ENCODE measurements at regions of chr2 and their contacts with region 1.

Region 1: GRCh38 chr2:202870431-202871299 is 901 bp downstream of the ICA1L start:
- DNase-seq: peak; percentile 78
- H3K4me3 ChIP-seq: peak overlapping the region; percentile 80
- H3K27ac ChIP-seq: peak overlapping the region; percentile 39
- H3K4me1 ChIP-seq: peaks cover 11% of the 10 kb centered on the region
- CTCF ChIP-seq: peak; percentile 85

Region 2: GRCh38 chr2:202051499-202052161 is 819.0 kb before region 1 on chr2:
- CTCF ChIA-PET with region 1: no interaction called
- POLR2A ChIA-PET with region 1: no interaction called
- intact Hi-C with region 1: no loop called
- DNase-seq: no peak
- H3K4me3 ChIP-seq: no peak overlapping the region
- H3K27ac ChIP-seq: no peak overlapping the region
- H3K4me1 ChIP-seq: no peaks in the 10 kb centered on the region
- CTCF ChIP-seq: no peak

Region 3: DNA sequence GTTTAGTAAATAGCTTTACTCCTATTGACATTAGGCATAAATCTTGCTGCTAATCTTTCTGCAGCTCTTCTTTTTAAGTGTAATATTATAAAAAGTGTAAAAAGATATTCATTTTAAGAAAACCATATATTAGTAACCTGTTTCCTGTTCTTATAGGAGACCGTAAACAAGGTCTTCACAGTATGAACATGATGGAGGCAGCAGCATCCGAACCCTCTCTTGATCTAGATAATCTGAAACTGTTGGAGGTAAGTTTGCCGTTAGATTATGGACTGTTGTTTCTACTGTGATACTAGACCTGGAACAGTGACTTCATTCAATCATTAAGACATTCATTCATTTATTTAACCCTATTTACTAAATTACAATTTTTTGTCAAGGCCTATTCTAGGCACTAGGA is 355.9 kb before region 1 on chr2:
- CTCF ChIA-PET with region 1: no interaction called
- POLR2A ChIA-PET with region 1: no interaction called
- intact Hi-C with region 1: no loop called
- DNase-seq: no peak
- H3K4me3 ChIP-seq: no peak overlapping the region
- H3K27ac ChIP-seq: no peak overlapping the region
- H3K4me1 ChIP-seq: no peaks in the 10 kb centered on the region
- CTCF ChIP-seq: no peak

Region 4: GRCh38 chr2:202574541-202574940 is 296.1 kb before region 1 on chr2:
- CTCF ChIA-PET with region 1: no interaction called
- POLR2A ChIA-PET with region 1: no interaction called
- intact Hi-C with region 1: loop called (anchors 5 kb)
- DNase-seq: no peak
- H3K4me3 ChIP-seq: no peak overlapping the region
- H3K27ac ChIP-seq: no peak overlapping the region
- H3K4me1 ChIP-seq: no peaks in the 10 kb centered on the region
- CTCF ChIP-seq: no peak

Region 5: DNA sequence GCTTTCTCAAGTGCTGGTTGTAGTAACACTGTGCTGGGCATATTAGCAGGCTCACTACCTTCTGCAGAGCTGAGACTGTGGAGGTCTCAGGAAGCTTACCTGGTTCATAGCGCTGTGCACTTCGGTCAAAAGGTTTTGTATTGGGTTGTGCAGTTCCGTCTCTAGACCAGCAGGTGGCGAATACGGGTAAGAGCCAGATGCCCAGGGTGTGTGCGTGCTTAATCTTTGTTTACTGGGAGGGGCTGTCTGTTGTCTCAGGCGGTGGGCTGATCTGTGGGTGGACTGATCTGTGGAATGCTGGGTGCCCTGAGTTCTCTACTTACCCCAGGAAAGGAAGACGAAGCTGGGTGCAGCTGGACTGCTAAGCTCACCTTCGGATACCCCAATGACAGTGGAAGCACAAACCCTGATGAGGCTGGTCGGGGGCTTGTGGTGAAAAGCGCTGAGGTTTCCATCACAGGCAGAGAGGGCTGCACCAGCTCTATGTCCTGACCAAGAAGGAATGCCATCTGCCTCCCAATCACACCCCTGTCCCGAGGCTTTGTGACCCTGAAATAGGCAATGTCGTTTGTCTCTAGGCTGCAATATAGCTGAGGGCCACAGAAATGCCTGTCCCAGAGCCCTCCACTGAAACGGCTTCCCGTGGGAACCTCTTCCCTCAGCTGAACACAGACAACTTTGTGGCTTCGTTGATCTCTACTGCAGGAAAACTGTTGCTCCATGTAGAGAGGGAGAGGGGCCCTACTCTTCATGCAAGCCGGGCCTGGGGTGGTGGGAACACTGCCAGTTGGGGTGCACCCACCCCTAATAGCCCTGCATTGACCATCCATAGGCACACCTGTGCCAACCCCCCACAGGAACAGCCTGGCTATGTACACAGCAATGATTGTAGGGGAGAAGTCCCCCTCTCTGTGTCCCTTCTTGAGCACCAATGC is 281.8 kb before region 1 on chr2:
- CTCF ChIA-PET with region 1: interaction called, 3 read pairs
- POLR2A ChIA-PET with region 1: interaction called, 3 read pairs
- intact Hi-C with region 1: loop called (anchors 1 kb)
- DNase-seq: peak; percentile 86
- H3K4me3 ChIP-seq: no peak overlapping the region
- H3K27ac ChIP-seq: no peak overlapping the region
- H3K4me1 ChIP-seq: peaks cover 3% of the 10 kb centered on the region
- CTCF ChIP-seq: peak; percentile 93

Region 6: DNA sequence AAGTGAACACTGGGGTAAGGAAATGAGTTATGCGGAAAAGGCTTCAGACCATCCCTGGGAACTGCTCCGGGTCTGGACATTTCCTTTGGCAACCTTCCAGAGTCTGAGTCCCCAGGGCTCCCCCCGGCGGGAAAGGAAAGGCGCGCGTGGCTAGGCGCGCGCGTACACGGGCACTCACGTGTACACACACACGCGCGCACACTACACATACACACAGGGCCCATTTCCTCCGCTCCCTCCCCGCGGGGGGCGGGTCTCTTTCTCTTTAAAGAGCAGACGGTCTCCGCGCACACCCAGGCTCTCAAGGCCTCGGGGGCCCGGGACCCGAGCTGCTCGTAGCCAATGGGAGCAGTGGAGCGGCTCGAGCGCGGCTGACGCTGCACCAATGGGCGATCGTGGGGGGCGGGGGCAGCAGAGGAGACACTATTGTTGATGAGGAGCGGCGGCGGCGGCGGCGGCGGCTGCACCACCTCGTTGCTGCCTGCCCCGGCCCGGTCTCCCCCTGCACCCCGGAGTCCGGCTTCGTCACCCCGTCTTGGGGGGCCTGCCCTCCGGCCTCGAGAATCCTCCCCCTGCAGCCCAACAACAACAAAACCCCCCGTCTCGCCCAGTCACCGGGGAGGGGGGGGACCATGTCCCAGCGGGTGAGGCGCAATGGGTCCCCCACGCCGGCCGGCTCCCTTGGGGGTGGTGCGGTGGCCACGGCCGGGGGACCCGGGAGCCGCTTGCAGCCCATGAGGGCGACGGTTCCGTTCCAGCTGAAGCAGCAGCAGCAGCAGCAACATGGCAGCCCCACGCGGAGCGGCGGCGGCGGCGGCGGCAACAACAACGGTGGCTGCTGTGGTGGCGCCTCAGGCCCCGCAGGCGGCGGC is 235.9 kb before region 1 on chr2 and contains the start of gene FAM117B:
- CTCF ChIA-PET with region 1: no interaction called
- POLR2A ChIA-PET with region 1: interaction called, 3 read pairs
- intact Hi-C with region 1: loop called (anchors 2 kb)
- DNase-seq: peak; percentile 99
- H3K4me3 ChIP-seq: peak within 1 kb of the TSS; percentile 83
- H3K27ac ChIP-seq: peak within 1 kb of the TSS; percentile 69
- H3K4me1 ChIP-seq: peaks cover 38% of the 10 kb centered on the region
- CTCF ChIP-seq: 0 out of 2 replicates have a peak, but pooled peaks have one; percentile 6
- total RNA-seq, gene FAM117B: 3.1 and 4.2 TPM in 2 replicates

Region 7: DNA sequence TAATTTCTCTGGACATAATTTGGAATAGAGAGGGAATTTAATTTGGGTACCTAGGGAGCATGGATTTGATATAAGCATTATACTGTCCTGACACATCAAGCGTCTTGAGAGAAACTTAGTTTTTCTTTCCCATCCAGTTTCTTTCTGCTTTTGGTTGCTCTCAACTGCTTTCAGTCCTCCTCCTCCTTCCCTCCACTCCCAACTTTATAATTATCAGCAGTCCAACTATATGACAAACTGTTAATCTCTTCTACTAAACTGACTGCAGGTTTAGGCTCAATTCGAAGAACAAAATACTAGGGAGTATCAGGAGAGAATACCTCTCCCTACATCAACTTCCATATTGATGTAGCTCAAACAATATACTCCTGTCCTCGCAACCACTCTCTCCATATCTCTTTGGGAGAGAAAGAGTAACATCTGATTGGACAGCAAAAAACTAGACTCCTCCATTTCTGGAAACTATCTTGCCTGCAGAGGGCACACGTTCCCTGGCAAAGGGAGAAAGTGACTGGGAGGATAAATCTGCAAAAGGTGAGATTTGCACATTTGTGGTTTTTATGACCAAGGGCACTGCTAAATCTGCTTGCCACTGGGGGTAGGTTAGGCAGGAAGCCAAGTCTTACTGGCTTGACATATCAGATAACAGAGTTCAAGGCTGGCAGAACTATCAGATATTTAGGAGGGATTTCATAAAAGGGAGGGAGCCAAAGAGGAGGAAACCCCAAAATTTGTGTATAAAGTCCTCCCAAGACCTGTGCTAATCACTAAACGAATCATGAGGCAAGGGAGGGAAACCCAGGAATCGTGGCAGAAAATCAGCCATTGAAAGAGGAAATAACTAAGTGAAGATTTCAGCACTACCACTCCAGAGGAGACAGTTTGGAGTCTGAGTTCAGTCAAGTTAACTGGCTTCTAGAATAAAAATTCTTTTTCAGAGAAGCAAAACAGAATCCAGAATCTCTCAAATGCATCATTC is 39.1 kb before region 1 on chr2:
- CTCF ChIA-PET with region 1: no interaction called
- POLR2A ChIA-PET with region 1: no interaction called
- intact Hi-C with region 1: loop called (anchors 1 kb)
- DNase-seq: peak; percentile 69
- H3K4me3 ChIP-seq: no peak overlapping the region
- H3K27ac ChIP-seq: no peak overlapping the region
- H3K4me1 ChIP-seq: peaks cover 8% of the 10 kb centered on the region
- CTCF ChIP-seq: peak; percentile 88

Region 8: DNA sequence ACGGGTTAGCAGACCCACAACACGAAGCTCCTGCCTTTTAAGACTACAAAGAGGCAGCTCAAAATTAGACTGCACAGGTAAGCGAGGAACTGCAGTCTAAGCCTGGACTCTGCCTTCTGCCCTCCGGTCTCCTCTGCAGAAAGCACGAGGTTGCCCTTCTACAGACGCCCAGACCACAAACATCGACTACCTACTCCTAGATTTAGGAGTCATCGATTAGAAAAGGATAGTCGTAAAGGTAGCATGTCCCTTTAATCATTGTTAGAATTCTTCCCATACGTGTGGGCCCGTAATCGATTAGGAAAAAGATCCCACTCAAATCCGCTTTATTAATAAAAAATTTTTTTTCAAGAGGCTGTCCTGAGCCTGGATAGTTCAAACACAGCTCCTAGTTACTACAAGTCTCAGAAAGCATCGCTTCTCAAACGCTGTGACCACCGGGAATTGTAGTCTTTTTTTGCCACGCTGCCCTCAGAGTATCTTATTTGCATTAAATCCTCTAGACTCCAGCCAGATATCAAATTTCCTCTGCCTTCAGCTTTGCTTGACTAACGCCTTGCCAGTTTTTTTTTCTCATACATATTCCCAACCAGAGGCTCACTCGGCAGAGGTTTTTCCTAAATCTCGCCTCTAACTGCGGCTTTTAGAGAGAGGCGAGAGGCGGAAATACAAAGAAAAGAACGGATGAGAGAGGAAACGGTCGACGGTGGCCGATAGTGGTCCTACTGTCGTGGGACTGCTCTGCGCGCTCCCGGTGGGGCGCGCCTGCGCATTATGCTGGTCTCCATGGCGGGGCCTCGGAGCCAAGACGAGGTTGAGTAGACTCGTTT is 41.1 kb after region 1 on chr2 and contains the starts of genes CARF and WDR12:
- CTCF ChIA-PET with region 1: no interaction called
- POLR2A ChIA-PET with region 1: interaction called, 11 read pairs
- intact Hi-C with region 1: loop called (anchors 1 kb)
- DNase-seq: peak; percentile 94
- H3K4me3 ChIP-seq: peak within 1 kb of the TSS; percentile 88
- H3K27ac ChIP-seq: peak within 1 kb of the TSS; percentile 82
- H3K4me1 ChIP-seq: peaks cover 20% of the 10 kb centered on the region
- CTCF ChIP-seq: no peak
- total RNA-seq, gene CARF: 12.5 and 14.7 TPM in 2 replicates
- total RNA-seq, gene WDR12: 38.4 and 54.1 TPM in 2 replicates

Region 9: GRCh38 chr2:203400816-203401585 is 530.3 kb after region 1 on chr2:
- CTCF ChIA-PET with region 1: no interaction called
- POLR2A ChIA-PET with region 1: no interaction called
- intact Hi-C with region 1: no loop called
- DNase-seq: no peak
- H3K4me3 ChIP-seq: no peak overlapping the region
- H3K27ac ChIP-seq: no peak overlapping the region
- H3K4me1 ChIP-seq: no peaks in the 10 kb centered on the region
- CTCF ChIP-seq: no peak